ENCODE measurements at regions of chr12 and their contacts with region 1.

Region 1: GRCh38 chr12:81395431-81395830 is 317.6 kb downstream of the ACSS3 start:
- DNase-seq: no peak
- H3K4me3 ChIP-seq: no peak overlapping the region
- H3K27ac ChIP-seq: no peak overlapping the region
- H3K4me1 ChIP-seq: no peaks in the 10 kb centered on the region
- H3K27me3 ChIP-seq: no peaks in the 10 kb centered on the region
- CTCF ChIP-seq: no peak
- POLR2A ChIP-seq: no peak

Region 2: GRCh38 chr12:81699567-81699966 is 304.1 kb after region 1 on chr12:
- intact Hi-C with region 1: loop called (anchors 5 kb)
- DNase-seq: no peak
- H3K4me3 ChIP-seq: no peak overlapping the region
- H3K27ac ChIP-seq: no peak overlapping the region
- H3K4me1 ChIP-seq: no peaks in the 10 kb centered on the region
- H3K27me3 ChIP-seq: no peaks in the 10 kb centered on the region
- CTCF ChIP-seq: no peak
- POLR2A ChIP-seq: no peak

Measured in breast epithelium (tissue), 4 donors.